Endothelial cell of umbilical vein (primary cell): ENCODE measurements at regions of chr13 and their contacts with region 1.

Region 1: GRCh38 chr13:28574617-28575142 is 79.8 kb upstream of the FLT1 start:
- DNase-seq: peak; percentile 98
- H3K4me3 ChIP-seq: no peak overlapping the region
- H3K27ac ChIP-seq: peak overlapping the region; percentile 99
- H3K4me1 ChIP-seq: peaks cover 10% of the 10 kb centered on the region
- H3K27me3 ChIP-seq: no peaks in the 10 kb centered on the region
- CTCF ChIP-seq: no peak
- POLR2A ChIP-seq: no peak

Region 2: DNA sequence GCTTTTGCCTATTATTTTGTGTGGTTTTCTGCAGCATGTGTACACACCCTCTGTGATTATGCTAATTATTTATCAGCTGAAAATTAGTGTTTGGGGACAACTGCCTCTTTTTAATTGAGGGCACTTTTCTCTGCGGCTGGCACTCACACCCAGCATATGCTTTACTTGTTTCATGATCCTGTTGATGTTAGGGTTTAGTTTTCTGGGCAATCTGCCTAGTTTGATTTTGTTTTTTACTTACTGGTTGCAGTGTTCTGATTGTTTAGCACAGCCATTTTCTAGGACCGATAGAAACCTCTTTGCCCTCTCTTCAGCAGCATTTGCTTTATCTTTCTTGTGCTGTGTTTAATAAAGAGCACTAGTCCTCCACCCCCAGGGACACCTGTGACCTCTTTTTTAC is 274.8 kb before region 1 on chr13:
- CTCF ChIA-PET with region 1: no interaction called
- POLR2A ChIA-PET with region 1: no interaction called
- dilution Hi-C with region 1: no loop called
- intact Hi-C with region 1: no loop called
- DNase-seq: no peak
- H3K4me3 ChIP-seq: no peak overlapping the region
- H3K27ac ChIP-seq: no peak overlapping the region
- H3K4me1 ChIP-seq: no peaks in the 10 kb centered on the region
- H3K27me3 ChIP-seq: no peaks in the 10 kb centered on the region
- CTCF ChIP-seq: no peak
- POLR2A ChIP-seq: no peak

Region 3: GRCh38 chr13:28401303-28402056 is 173.2 kb before region 1 on chr13:
- CTCF ChIA-PET with region 1: no interaction called
- POLR2A ChIA-PET with region 1: no interaction called
- dilution Hi-C with region 1: no loop called
- intact Hi-C with region 1: loop called (anchors 2 kb)
- DNase-seq: peak; percentile 93
- H3K4me3 ChIP-seq: peak overlapping the region in 1 of 3 experiments; percentile 30
- H3K27ac ChIP-seq: peak overlapping the region; percentile 99
- H3K4me1 ChIP-seq: peaks cover 54% of the 10 kb centered on the region
- H3K27me3 ChIP-seq: no peaks in the 10 kb centered on the region
- CTCF ChIP-seq: no peak
- POLR2A ChIP-seq: no peak

Region 4: DNA sequence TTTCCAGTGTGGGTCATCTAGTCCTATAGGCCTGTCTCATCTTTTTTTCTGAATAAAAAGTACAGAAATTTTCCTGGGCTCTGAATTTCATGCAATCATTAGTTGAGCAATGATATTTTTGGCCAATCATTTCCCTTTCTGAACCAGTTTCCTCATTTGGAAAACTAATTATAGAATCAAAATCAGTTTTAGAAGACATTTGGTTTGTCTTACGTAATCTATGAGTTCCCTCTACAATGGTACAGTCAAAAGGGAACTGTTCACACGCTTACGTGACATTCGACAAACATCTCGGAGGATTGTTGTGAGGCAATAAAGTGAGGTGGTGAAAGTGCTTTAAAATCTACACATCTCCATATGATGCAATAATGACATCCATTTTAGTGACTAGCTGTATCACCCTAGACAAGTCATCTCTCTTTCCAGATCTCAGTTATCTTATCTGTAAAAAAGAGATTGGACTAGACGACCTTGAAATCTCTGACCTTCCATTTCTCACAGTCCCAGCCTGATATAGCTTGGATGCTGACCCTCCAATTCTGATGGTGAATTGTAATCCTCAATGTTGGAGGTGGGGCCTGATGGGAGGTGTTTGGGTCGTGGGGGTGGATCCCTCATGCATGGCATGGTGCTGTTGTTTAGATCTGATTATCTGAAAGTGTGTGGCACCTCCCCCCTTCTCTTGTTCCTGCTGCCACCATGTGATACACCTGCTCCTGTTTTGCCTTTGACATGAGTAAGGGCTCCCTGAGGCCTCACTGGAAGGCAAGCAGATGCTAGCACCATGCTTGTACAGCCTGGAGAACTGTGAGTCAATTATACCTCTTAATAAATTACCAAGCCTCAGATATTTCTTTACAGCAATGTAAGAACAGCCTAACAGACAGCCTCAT is 106.4 kb before region 1 on chr13:
- CTCF ChIA-PET with region 1: no interaction called
- POLR2A ChIA-PET with region 1: no interaction called
- dilution Hi-C with region 1: no loop called
- intact Hi-C with region 1: loop called (anchors 1 kb)
- DNase-seq: no peak
- H3K4me3 ChIP-seq: no peak overlapping the region
- H3K27ac ChIP-seq: no peak overlapping the region
- H3K4me1 ChIP-seq: peaks cover 57% of the 10 kb centered on the region
- H3K27me3 ChIP-seq: no peaks in the 10 kb centered on the region
- CTCF ChIP-seq: no peak
- POLR2A ChIP-seq: no peak

Region 5: DNA sequence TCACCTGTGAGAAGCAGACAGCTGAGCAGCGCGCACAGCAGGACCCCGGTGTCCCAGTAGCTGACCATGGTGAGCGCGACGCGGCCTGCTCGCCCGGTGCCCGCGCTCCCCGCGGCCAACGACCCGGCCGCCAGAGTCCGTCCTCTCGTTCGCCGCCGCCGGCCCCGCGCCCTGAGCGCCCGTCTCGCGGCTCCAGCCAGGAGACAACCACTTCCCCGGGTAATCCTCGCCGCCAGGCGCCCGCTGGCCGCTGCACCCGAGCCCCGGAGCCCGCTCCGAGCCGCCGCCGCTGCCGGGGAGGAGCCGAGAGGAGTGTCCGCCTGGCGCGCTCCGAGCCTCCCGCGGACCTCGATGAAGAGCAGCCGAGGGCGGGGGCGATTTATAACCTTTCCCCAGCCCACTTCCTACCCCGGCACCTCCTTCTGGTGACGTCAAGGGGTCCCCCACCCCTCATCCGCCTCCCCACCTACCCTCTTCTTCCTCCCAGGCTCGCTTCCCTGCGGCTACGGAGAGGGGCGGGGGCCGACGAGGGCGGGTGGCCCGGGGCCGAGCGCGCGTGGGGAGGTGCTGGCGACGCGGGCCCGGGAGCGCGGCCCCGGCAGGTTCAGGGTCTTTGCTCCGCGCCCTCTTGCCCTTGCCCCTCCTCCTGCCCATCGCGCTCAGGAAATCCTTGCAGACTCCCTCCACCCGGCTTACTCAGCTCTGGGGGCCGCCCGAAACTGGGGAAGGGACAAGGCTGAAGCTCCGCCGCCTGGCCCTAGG is 79.7 kb before region 1 on chr13 and contains the start of gene FLT1:
- CTCF ChIA-PET with region 1: no interaction called
- POLR2A ChIA-PET with region 1: no interaction called
- dilution Hi-C with region 1: no loop called
- intact Hi-C with region 1: loop called (anchors 1 kb)
- DNase-seq: peak; percentile 74
- H3K4me3 ChIP-seq: peak within 1 kb of the TSS; percentile 95 to 98 (median 96)
- H3K27ac ChIP-seq: peak within 1 kb of the TSS; percentile 85
- H3K4me1 ChIP-seq: peaks cover 44% of the 10 kb centered on the region
- H3K27me3 ChIP-seq: no peaks in the 10 kb centered on the region
- CTCF ChIP-seq: no peak
- POLR2A ChIP-seq: peak; percentile 90
- total RNA-seq, gene FLT1: 104 and 178 TPM in 2 replicates

Region 6: GRCh38 chr13:28531077-28531844 is 43.4 kb before region 1 on chr13:
- CTCF ChIA-PET with region 1: no interaction called
- POLR2A ChIA-PET with region 1: no interaction called
- dilution Hi-C with region 1: no loop called
- intact Hi-C with region 1: loop called (anchors 1 kb)
- DNase-seq: peak; percentile 85
- H3K4me3 ChIP-seq: peak overlapping the region in 2 of 3 experiments; percentile 45
- H3K27ac ChIP-seq: peak overlapping the region; percentile 36
- H3K4me1 ChIP-seq: peaks cover 14% of the 10 kb centered on the region
- H3K27me3 ChIP-seq: no peaks in the 10 kb centered on the region
- CTCF ChIP-seq: no peak
- POLR2A ChIP-seq: no peak

Region 7: GRCh38 chr13:28557725-28558520 is 16.8 kb before region 1 on chr13:
- CTCF ChIA-PET with region 1: no interaction called
- POLR2A ChIA-PET with region 1: no interaction called
- dilution Hi-C with region 1: no loop called
- intact Hi-C with region 1: loop called (anchors 2 kb)
- DNase-seq: peak; percentile 71
- H3K4me3 ChIP-seq: no peak overlapping the region
- H3K27ac ChIP-seq: peak overlapping the region; percentile 30
- H3K4me1 ChIP-seq: peaks cover 8% of the 10 kb centered on the region
- H3K27me3 ChIP-seq: no peaks in the 10 kb centered on the region
- CTCF ChIP-seq: no peak
- POLR2A ChIP-seq: no peak

Region 8: DNA sequence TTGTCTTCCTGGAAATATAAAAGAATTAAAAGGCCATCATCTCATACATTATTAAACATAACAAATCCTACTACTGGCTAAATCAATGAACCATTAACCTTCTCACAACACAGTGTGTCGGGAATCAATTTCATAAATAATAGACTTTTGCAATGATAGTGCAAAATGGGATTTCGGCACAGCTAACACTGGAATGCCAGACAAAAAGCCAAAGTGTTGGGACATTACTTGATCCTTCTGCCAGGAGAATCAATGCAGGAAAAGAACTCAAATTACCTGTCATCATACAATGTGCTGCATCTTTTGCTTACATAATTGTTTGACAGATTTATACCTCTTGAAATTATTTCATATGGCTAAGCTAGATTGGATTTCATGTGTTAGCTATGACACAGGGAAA is 579.7 kb after region 1 on chr13:
- CTCF ChIA-PET with region 1: no interaction called
- POLR2A ChIA-PET with region 1: no interaction called
- dilution Hi-C with region 1: no loop called
- intact Hi-C with region 1: no loop called
- DNase-seq: no peak
- H3K4me3 ChIP-seq: no peak overlapping the region
- H3K27ac ChIP-seq: no peak overlapping the region
- H3K4me1 ChIP-seq: no peaks in the 10 kb centered on the region
- H3K27me3 ChIP-seq: no peaks in the 10 kb centered on the region
- CTCF ChIP-seq: no peak
- POLR2A ChIP-seq: no peak